ENCODE measurements at regions of chr22 and their contacts with region 1.

Region 1: GRCh38 chr22:30955153-30955552 is 13.4 kb downstream of the MORC2 start:
- DNase-seq: peak in 1 of 14 experiments; percentile 9
- ATAC-seq: no peak
- H3K4me3 ChIP-seq: no peak overlapping the region
- H3K4me3 Mint-ChIP-seq: peak overlapping the region; percentile 54
- H3K27ac ChIP-seq: no peak overlapping the region
- H3K27ac Mint-ChIP-seq: peak overlapping the region; percentile 74
- H3K4me1 ChIP-seq: peaks cover 29% of the 10 kb centered on the region
- H3K4me1 Mint-ChIP-seq: peaks cover 83% of the 10 kb centered on the region
- H3K27me3 ChIP-seq: no peaks in the 10 kb centered on the region
- H3K27me3 Mint-ChIP-seq: no peaks in the 10 kb centered on the region
- CTCF ChIP-seq: no peak

Region 2: GRCh38 chr22:31075961-31076360 is 120.8 kb after region 1 on chr22:
- CTCF ChIA-PET with region 1: no interaction called
- POLR2A ChIA-PET with region 1: no interaction called
- intact Hi-C with region 1: loop called in 1 of 2 experiments (anchors 2 kb)
- DNase-seq: no peak
- ATAC-seq: no peak
- H3K4me3 ChIP-seq: no peak overlapping the region
- H3K4me3 Mint-ChIP-seq: no peak overlapping the region
- H3K27ac ChIP-seq: no peak overlapping the region
- H3K27ac Mint-ChIP-seq: no peak overlapping the region
- H3K4me1 ChIP-seq: peaks cover 7% of the 10 kb centered on the region
- H3K4me1 Mint-ChIP-seq: no peaks in the 10 kb centered on the region
- H3K27me3 ChIP-seq: no peaks in the 10 kb centered on the region
- H3K27me3 Mint-ChIP-seq: peaks cover 5% of the 10 kb centered on the region
- CTCF ChIP-seq: no peak

Measured in CD4-positive, alpha-beta T cell (primary cell).